Aorta (tissue), 5 donors: ENCODE measurements at regions of chr21 and their contacts with region 1.

Region 1: DNA sequence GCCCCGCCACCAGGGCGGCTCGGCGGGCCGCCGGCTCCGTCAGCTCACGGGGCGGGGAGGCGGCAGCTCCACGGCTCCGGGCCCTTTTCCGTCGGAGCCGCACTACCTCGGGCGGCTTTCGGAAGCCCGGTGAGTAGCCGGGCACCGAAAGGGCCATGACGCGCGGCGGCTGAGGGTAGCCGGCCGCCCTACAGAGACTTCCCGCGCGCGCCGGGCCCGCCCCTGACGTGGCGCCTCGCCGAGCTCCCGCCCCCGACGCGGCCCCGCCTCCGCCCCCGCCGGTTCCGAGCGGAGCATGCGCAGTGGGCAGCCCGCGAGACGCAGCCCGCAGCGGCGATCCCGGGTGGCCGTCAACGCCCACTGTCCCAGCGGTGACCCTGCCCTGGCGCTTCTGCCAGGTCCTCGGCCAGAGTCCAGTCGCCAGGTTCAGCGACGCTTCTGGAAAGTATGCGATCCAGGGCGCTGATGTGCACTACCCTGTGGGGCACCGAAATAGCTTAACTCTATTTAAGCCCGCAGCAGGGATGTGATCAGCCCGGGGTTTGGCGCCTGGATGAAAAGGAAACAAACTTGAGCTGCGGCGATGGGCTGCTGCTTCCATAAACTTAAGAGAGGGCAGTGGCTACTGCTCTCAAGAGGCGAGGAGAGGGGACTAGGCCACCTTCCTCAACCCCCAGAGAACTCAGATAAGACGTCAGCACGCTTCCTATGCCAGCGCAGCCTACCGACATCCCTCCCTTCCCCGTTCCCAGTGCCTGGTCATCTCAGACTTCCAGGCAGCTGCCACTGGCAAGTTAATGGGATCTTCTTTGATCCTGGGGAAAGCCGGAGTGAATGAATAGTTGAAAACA is at the start of gene DONSON:
- DNase-seq: peak; percentile 92 to 97
- ATAC-seq: peak; percentile 96
- H3K4me3 ChIP-seq: peak within 1 kb of the TSS; percentile 89
- H3K27ac ChIP-seq: peak within 1 kb of the TSS; percentile 47 to 82
- H3K4me1 ChIP-seq: no peaks in the 10 kb centered on the region
- H3K27me3 ChIP-seq: no peaks in the 10 kb centered on the region
- total RNA-seq, gene DONSON: 8.5 to 10.9 TPM

Region 2: DNA sequence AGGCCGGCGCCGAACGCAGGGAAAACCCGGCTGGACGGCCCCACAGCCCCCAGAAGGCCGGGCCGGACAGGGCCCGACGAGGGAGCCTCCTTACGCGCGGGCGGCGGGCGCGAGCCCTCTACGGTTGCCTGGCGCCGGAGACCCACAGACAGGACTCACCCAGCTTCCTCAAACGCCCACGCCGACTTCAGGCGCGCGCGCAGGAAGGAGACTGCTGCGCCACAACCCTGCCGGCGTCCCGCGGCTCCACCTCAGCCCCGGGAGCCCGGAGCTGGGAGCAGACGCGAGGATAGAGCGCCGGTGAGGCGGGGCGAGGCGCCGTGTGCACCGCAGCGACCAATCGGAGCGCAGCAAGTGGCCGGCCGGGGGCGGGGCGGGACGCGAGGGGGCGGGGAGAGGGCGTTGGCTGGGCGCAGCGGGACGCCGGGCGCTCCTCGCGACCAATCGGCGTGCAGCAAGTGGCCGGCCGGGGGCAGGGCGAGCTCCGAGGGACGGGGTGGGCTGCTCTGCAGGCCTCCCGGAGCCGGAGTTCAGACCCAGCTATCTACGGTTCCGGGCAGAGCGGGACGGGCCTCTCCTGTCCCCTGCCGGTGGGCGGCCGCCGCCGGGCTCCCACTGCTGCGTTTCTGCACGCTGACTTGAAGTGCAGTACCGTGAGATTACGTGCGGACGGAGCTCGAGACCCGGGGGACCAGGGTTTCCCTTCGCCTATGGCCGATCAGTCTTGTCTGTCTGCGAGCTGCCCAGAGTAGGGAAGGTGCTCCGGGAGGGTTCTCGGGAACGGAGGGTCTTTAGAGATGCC is 108.8 kb before region 1 on chr21 and contains the start of gene TMEM50B:
- intact Hi-C with region 1: no loop called
- DNase-seq: peak; percentile 97 to 99
- ATAC-seq: peak; percentile 99
- H3K4me3 ChIP-seq: peak within 1 kb of the TSS; percentile 87 to 91
- H3K27ac ChIP-seq: peak within 1 kb of the TSS; percentile 91 to 95
- H3K4me1 ChIP-seq: no peaks in the 10 kb centered on the region
- H3K27me3 ChIP-seq: no peaks in the 10 kb centered on the region
- total RNA-seq, gene TMEM50B: 37.8 to 45.2 TPM

Region 3: DNA sequence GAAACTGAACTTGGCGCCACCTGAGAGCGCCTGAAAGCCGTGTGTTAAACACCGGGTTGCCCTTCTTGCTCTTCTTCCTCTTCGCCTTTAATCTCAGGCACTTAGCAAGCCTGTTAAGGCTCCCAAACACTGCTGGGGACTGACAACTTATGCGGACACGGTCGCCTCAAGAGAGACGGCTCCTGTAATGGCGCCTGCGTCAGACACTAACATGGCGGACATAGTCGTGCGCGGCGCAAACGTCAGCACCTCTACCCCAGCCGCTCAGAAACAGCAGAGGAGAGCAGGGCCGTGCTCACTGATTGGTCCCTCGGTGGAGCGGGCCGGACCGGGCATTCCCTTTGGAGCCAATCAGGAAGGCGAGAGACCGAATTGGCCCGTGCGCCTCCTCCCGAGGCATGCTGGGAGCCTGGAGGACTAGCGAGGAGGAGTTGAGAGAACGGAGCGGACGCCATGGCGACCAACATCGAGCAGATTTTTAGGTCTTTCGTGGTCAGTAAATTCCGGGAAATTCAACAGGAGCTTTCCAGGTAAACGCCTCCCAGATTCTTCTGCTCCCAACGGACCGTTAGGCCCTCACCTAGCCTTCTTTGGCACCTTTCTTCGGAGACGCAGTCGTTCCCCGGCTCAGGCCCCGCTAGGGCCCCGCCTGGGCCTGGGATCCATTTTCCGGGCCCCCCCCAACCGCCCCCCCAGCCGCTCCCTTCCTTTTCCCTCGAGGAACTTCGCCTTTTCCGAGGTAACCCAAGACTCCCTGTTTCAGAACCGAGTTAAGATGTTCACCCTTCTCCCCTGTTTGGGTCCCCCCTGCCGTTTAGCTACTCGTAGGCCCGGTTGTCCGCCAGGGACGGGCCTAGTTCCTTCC is 45.8 kb before region 1 on chr21 and contains the start of gene SON:
- intact Hi-C with region 1: loop called in 1 of 2 experiments (anchors 2 kb)
- DNase-seq: peak; percentile 99 to 100
- ATAC-seq: peak; percentile 100
- H3K4me3 ChIP-seq: peak within 1 kb of the TSS; percentile 97 to 100
- H3K27ac ChIP-seq: peak within 1 kb of the TSS; percentile 88 to 96
- H3K4me1 ChIP-seq: no peaks in the 10 kb centered on the region
- H3K27me3 ChIP-seq: no peaks in the 10 kb centered on the region
- total RNA-seq, gene SON: 322 to 350 TPM